Activated CD4-positive, alpha-beta memory T cell treated with anti-CD3 and anti-CD28 coated beads, Interleukin-2, amount 10 ng/mL, durations not matched to agents 7 days and 5 days (primary cell): ENCODE measurements at regions of chr18 and their contacts with region 1.

Region 1: GRCh38 chr18:50878345-50879301 is at the start of gene ME2:
- DNase-seq: peak; percentile 93
- H3K4me3 Mint-ChIP-seq: peak within 1 kb of the TSS; percentile 95
- H3K27ac Mint-ChIP-seq: peak within 1 kb of the TSS; percentile 98
- H3K4me1 Mint-ChIP-seq: peaks cover 30% of the 10 kb centered on the region
- H3K27me3 Mint-ChIP-seq: peaks cover under 1% of the 10 kb centered on the region
- total RNA-seq, gene ME2: 71.8 to 73.6 TPM

Region 2: DNA sequence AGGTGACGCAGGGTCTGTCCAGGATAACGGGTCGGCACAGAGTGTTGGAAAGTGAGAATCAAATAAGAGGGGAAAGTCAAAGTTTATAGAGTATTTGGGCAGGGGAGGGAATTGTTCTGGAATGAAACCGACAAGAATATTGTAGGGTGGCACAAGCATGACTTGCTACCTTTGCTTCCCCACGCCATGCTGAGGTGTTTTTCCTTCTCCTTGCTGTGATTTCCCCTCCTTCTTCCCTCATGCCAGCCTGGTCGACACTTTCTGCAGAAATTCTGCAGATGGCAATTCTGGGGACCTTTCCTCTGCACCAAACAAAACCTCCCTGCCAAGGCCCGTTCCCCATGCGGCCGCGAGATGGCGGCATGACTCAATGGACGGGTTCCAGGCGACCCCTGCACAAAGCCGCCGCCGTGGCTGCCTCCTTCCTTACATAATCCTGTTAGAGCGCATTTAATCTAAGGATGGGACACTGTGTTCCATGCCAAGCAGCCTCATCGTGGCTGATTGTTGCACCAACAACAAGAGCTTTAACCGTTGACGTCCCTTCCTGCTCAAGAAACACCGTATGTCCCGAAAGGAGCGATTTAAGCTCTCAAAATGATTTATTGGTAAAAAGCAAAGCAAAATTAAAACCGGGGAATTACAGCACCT is 58.8 kb before region 1 on chr18 and contains the start of gene MRO:
- CTCF ChIA-PET with region 1: no interaction called
- POLR2A ChIA-PET with region 1: interaction called, 10 read pairs
- DNase-seq: peak; percentile 81
- H3K4me3 Mint-ChIP-seq: no peak within 1 kb of the TSS
- H3K27ac Mint-ChIP-seq: no peak within 1 kb of the TSS
- H3K4me1 Mint-ChIP-seq: no peaks in the 10 kb centered on the region
- H3K27me3 Mint-ChIP-seq: peaks cover 13% of the 10 kb centered on the region
- total RNA-seq, gene MRO: not detected

Region 3: DNA sequence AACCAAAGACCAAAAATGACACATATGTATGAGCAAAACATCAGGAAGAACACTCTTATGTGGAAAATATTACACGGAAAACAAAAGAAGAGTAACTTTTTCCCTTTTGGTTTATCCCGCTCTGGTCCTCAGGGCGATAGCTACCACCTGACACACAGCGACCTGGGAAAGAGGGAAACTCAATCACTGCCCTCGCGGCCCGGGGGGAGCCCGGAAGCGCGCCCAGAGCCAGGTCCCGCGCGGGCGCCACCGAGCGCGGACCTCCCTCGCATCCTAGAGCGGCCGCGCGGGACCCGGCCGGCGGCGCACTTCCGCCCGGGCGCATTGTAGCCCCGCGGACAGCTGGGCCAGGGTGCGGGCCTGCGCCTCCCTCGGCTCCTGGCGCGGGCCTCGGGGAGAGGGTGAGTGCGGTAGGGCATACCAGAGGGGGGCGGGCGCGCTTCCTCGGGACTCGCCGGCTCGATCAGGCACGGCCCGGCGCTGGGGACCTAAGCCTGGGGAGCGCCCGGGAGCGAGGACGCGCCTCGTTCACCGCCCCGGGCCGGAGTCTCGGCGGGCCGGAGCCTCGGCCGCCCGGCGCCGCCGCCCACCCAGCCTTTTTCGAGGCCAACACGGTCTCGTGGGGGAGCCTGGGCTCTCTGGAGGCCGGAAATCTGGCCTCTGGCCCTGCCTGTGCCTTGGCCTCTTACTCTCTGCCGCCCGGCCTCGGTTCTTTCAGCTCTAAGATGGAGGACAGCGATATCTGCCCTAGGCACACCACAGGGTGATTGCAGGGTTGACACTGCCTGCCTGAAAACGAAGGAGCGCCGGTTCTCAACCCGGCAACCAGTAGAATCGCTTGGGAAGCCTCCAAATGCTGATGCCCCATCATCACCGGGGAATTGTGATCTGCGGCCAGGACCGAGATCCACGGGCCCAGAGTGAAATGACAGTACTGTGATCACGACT is 89.4 kb after region 1 on chr18 and contains the start of gene ELAC1:
- CTCF ChIA-PET with region 1: no interaction called
- POLR2A ChIA-PET with region 1: interaction called, 62 read pairs
- DNase-seq: peak; percentile 67
- H3K4me3 Mint-ChIP-seq: peak within 1 kb of the TSS; percentile 97
- H3K27ac Mint-ChIP-seq: peak within 1 kb of the TSS; percentile 80
- H3K4me1 Mint-ChIP-seq: peaks cover 28% of the 10 kb centered on the region
- H3K27me3 Mint-ChIP-seq: no peaks in the 10 kb centered on the region
- total RNA-seq, gene ELAC1: 5.9 to 7.3 TPM

Region 4: DNA sequence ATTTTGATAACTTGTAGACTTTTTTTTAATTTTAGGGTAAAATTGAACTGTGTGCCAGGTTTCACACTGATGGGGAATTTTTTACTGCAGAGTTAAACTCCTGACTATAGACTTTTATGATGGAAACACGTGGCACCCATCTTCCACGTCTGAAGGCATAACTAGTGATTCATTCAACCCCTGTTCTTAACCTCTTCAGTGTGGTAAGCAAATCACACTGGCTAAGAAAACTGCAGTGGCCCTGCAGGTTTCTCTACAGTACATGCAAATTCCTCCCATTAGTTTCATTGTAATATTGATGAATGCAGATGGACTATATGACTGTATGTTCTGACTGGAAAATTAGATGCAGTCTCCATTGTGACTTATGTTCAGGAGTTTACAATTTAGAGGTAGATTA is 198.6 kb after region 1 on chr18:
- CTCF ChIA-PET with region 1: no interaction called
- POLR2A ChIA-PET with region 1: no interaction called
- DNase-seq: no peak
- H3K4me3 Mint-ChIP-seq: no peak overlapping the region
- H3K27ac Mint-ChIP-seq: no peak overlapping the region
- H3K4me1 Mint-ChIP-seq: peaks cover 23% of the 10 kb centered on the region
- H3K27me3 Mint-ChIP-seq: no peaks in the 10 kb centered on the region